MCF 10A (cell line): ENCODE measurements at regions of chr4 and their contacts with region 1.

Region 1: DNA sequence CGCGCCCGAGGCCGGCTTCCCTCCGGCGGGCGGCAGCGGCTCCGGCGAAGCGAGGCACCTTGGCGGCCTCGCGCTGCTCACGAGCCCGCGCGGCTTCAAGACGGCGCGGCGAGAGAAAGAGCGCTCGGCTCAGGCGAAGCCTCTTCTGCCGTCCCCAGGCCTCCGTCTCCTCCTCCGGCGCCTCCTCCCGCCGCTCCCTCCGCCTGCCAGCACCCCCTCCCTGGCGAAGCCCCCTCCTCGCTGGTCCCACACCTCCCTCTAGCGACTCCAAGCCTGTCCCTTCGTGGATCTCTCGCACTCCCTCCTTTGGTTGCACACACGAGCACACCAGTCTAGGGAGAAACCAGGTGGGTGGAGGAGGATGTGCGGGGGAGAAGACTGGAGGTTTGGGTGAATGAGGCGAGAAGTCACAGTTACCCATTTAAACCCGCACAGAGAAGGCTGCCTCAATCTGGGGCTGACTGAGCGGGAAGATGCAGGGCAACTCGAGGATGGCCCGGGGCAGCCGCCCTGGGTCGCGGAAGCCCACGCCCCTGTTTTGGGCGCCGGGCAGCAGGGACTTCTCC is at the start of gene CAMK2D:
- DNase-seq: peak; percentile 89
- H3K4me3 Mint-ChIP-seq: peak within 1 kb of the TSS; percentile 99
- H3K27ac Mint-ChIP-seq: peak within 1 kb of the TSS; percentile 96
- H3K4me1 Mint-ChIP-seq: peaks cover 13% of the 10 kb centered on the region
- H3K27me3 Mint-ChIP-seq: no peaks in the 10 kb centered on the region
- CTCF ChIP-seq: no peak
- total RNA-seq, gene CAMK2D: 32.1 and 55.1 TPM in 2 replicates

Region 2: GRCh38 chr4:113278324-113278934 is 483.3 kb before region 1 on chr4:
- CTCF ChIA-PET with region 1: no interaction called
- POLR2A ChIA-PET with region 1: no interaction called
- intact Hi-C with region 1: loop called (anchors 5 kb)
- DNase-seq: peak; percentile 90
- H3K4me3 Mint-ChIP-seq: no peak overlapping the region
- H3K27ac Mint-ChIP-seq: no peak overlapping the region
- H3K4me1 Mint-ChIP-seq: no peaks in the 10 kb centered on the region
- H3K27me3 Mint-ChIP-seq: no peaks in the 10 kb centered on the region
- CTCF ChIP-seq: peak; percentile 80

Region 3: GRCh38 chr4:113411496-113411938 is 350.2 kb before region 1 on chr4:
- CTCF ChIA-PET with region 1: no interaction called
- POLR2A ChIA-PET with region 1: interaction called, 6 read pairs
- intact Hi-C with region 1: loop called (anchors 1 kb)
- DNase-seq: peak; percentile 94
- H3K4me3 Mint-ChIP-seq: no peak overlapping the region
- H3K27ac Mint-ChIP-seq: peak overlapping the region; percentile 53
- H3K4me1 Mint-ChIP-seq: peaks cover 9% of the 10 kb centered on the region
- H3K27me3 Mint-ChIP-seq: no peaks in the 10 kb centered on the region
- CTCF ChIP-seq: peak; percentile 18

Region 4: DNA sequence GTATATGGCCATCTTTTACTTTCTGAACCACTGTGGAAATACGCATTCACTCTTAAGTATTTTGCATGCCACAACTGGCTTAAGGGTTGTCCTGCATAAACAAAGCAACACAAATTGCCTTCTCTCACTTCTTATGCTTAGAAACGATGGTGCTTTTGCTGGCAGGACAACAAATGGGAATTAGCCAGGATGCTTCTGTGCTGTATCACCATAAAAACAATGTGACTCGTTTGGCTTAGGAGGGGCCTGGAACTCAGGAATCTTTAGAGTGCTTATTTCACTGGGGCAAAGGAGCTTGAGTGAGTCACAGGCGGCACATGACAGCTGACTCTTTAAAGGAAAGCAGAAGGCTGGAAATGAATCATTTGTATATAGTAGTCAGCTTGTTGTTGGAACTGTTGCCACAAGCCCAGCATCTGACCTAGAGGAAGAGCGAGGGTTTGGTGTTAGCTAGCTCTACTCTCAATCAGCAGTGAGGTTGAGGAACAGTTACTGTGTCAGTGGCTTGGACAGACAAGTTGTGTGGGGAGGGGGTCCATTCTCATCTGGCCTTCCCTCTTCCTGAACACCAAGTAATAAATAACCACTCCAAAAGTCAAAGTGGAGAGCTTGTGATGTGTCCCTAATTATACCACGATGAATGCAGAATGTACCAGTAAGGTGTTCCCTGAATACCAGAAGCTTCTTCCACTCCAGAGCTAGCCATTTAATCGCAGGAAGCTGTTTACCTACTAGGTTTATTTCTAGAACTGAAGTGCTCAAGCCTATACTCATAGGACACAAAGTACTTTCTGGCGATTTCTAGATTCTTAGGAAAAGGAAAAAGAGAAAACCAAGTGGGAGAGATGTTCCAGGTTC is 293.3 kb before region 1 on chr4:
- CTCF ChIA-PET with region 1: interaction called, 9 read pairs
- POLR2A ChIA-PET with region 1: interaction called, 30 read pairs
- intact Hi-C with region 1: loop called (anchors 1 kb)
- DNase-seq: peak; percentile 98
- H3K4me3 Mint-ChIP-seq: peak overlapping the region; percentile 66
- H3K27ac Mint-ChIP-seq: peak overlapping the region; percentile 73
- H3K4me1 Mint-ChIP-seq: peaks cover 37% of the 10 kb centered on the region
- H3K27me3 Mint-ChIP-seq: no peaks in the 10 kb centered on the region
- CTCF ChIP-seq: no peak

Region 5: DNA sequence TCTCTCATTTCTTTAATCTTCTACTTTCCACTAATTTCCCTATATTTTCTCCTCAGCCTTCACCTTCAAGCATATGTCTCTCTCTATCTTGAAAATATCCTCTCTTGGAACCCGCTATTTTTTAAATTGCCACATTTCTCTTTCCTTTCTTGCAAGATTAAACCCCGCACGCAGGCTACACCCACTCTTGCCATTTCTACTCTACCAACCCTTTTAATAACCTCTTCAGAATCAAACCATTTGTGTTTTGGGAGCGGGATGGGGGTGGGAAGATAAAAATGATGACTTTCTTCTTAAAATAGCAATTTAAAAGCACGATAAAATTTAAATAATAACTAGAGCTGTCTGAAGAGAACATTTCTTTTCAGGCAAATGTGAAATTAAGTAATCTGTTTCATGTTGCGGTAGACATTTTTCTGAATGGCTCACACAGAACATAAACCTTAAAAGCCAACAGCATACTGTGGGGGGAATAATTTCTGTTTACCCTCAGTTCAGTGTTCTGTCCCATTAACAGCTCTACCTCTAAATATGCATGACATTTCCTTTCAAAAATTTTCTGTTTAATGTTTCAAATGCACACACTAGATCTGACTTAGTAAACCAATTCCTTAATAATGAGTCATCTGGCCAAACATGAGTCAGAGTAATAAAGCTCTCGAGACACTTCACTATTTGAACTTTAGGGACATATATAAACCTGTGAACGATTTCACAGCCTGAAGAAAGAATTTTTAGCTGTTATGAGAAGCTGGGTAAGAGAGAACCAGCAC is 197.2 kb after region 1 on chr4:
- CTCF ChIA-PET with region 1: interaction called, 3 read pairs
- POLR2A ChIA-PET with region 1: interaction called, 12 read pairs
- intact Hi-C with region 1: loop called (anchors 5 kb)
- DNase-seq: peak; percentile 89
- H3K4me3 Mint-ChIP-seq: peak overlapping the region; percentile 44
- H3K27ac Mint-ChIP-seq: peak overlapping the region; percentile 90
- H3K4me1 Mint-ChIP-seq: peaks cover 67% of the 10 kb centered on the region
- H3K27me3 Mint-ChIP-seq: no peaks in the 10 kb centered on the region
- CTCF ChIP-seq: no peak

Region 6: DNA sequence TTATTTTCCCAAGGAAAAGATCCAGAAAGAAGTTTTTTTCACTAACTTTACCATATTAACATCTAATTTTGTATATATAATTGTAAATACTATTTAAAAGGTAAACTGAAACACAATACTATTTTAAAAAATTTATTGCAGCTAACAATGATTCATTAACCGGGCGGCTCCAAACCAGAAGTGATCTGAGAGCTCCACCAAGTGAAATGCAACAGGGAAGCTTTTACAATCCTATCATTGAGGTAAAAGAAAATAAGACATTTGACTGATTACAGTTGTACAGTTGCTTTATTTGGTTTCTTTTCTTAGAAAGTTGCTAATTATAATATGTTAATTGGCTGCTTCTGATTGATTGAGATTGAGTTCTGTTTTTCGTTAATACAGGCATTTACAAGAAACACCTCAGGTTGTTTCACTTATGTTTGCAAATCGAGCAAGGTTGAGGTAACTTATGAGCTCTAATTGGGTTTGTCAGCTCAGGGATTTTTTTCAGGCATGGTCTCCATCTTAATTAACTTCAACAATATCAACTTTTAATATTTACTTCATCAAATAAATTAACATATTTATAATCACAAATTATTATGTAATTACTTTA is 616.7 kb after region 1 on chr4:
- CTCF ChIA-PET with region 1: interaction called, 7 read pairs
- POLR2A ChIA-PET with region 1: interaction called, 4 read pairs
- intact Hi-C with region 1: loop called (anchors 1 kb)
- DNase-seq: peak; percentile 55
- H3K4me3 Mint-ChIP-seq: no peak overlapping the region
- H3K27ac Mint-ChIP-seq: no peak overlapping the region
- H3K4me1 Mint-ChIP-seq: no peaks in the 10 kb centered on the region
- H3K27me3 Mint-ChIP-seq: no peaks in the 10 kb centered on the region
- CTCF ChIP-seq: peak; percentile 70